Body of pancreas (tissue), 4 donors: ENCODE measurements at regions of chr15 and their contacts with region 1.

Region 1: DNA sequence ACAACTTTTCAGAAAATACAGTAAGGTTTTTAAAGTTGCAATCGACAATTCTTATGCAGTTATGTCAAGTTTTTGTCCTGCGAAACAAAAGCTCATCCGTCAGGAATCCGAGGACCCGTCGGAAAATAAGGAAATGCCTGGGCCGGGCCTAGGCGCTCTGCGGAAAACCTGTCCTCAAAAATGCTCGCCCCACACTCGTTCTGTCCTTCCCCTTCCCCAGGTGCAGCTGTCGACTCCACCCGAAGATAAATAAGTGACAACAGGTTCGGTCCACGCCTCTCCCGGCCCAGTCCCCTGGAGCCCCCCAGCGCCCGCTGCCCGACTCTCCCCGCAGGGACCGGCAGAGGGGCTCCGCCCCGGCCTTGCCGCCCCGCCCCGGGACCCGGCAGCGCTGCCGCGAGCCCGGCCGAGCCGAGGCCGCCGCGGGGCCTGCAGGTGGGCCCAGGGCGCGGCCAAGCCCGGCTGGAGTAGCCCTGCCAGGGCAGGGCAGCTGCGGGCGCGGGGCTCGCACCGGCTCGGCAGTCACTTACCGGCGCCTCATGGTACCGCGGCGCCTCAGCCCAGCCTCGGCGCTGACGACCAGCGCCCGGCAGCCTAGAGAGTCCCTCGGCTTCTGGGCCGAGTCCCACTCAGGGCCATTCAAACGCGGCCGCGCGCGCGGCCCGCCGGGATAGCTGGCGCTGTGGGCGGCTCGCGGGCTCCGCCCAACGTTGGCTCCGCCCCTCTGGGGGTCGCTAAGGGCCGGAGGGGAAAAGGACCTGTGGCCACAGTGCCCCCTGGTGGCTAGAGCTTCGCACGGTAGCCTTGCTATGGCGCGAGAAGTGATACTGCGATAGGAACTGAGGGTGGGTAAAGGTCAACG is at the start of gene KATNBL1:
- DNase-seq: peak; percentile 95 to 98 (median 98)
- ATAC-seq: peak; percentile 99
- H3K4me3 ChIP-seq: peak within 1 kb of the TSS; percentile 24 to 39
- H3K27ac ChIP-seq: peak within 1 kb of the TSS; percentile 67 to 87 (median 81)
- H3K4me1 ChIP-seq: peaks cover 17% of the 10 kb centered on the region
- H3K27me3 ChIP-seq: no peaks in the 10 kb centered on the region
- CTCF ChIP-seq: peak; percentile 92 to 97 (median 96)
- POLR2A ChIP-seq: peak; percentile 89 to 92 (median 90)
- total RNA-seq, gene KATNBL1: 45.8 to 50.3 TPM

Region 2: DNA sequence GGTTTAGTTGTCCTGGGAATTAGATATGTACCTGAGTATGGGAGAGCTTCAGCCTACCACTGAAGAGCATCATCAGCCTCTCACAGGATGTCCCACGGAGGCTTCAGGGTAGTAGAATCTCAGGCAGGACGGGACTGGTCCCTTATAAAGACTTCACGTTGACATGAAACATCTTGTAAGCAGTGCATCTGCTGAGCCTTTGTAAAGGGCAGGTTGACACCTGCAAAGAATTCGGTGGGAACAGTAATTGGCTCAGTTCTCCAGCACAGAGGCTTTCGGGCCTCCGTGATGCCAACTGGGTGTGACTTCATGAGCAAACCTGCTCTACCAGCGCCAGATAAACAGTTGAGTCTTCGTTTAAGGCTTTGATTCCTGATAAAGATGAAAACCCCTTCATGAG is 143.7 kb before region 1 on chr15:
- intact Hi-C with region 1: loop called (anchors 5 kb)
- DNase-seq: no peak
- ATAC-seq: no peak
- H3K4me3 ChIP-seq: no peak overlapping the region
- H3K27ac ChIP-seq: no peak overlapping the region
- H3K4me1 ChIP-seq: no peaks in the 10 kb centered on the region
- H3K27me3 ChIP-seq: no peaks in the 10 kb centered on the region
- CTCF ChIP-seq: no peak
- POLR2A ChIP-seq: no peak

Region 3: DNA sequence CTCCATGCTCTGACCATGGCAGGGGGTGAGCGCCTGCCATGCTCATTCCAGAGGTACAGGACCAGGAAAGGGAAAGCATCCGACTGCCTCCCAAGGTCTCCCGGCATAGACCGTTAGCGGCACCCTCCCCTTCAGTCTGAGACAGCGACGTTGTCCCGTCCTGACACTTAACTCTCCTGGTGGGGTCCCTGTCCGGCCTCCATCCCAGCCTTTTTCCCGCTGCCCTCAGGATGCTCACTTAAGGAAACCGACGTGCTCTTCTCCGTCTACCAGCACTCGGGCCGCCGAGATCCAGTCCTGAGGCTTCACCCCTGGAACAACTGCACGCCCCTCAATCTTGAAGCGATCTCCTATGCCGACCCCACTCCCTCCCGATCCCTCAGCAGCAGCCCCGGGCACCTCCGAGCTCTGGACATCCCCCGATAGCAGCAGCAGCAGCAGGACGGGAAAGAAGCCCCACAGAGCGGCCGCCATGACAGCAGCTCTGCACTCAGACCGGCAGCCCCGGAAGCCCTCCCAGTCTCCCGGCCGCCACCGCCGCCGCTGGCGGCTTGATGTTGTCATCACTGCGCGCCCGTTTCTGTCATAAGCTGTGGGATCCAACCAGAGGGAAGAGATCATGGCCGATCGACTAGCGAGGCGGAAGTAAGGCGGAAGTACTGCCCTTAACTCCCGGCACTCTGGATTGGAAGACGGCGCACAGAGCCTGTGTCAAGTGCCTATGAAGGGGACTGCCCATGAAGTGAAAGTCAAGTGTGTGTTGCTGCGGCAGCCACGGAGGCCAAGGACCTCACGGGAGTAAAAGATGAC is 108.1 kb before region 1 on chr15 and contains the starts of genes EMC7 and PGBD4:
- intact Hi-C with region 1: loop called (anchors 10 kb)
- DNase-seq: peak; percentile 99
- ATAC-seq: peak; percentile 100
- H3K4me3 ChIP-seq: peak within 1 kb of the TSS; percentile 98 to 99
- H3K27ac ChIP-seq: peak within 1 kb of the TSS; percentile 72 to 88 (median 86)
- H3K4me1 ChIP-seq: peaks cover 20% of the 10 kb centered on the region
- H3K27me3 ChIP-seq: no peaks in the 10 kb centered on the region
- CTCF ChIP-seq: peak in 1 of 7 experiments; percentile 29
- POLR2A ChIP-seq: peak; percentile 78 to 96 (median 95)
- total RNA-seq, gene EMC7: 27.4 to 27.8 TPM
- total RNA-seq, gene PGBD4: 1.0 to 4.6 TPM